Spleen (tissue), 13 donors: ENCODE measurements at regions of chr11 and their contacts with region 1.

Region 1: DNA sequence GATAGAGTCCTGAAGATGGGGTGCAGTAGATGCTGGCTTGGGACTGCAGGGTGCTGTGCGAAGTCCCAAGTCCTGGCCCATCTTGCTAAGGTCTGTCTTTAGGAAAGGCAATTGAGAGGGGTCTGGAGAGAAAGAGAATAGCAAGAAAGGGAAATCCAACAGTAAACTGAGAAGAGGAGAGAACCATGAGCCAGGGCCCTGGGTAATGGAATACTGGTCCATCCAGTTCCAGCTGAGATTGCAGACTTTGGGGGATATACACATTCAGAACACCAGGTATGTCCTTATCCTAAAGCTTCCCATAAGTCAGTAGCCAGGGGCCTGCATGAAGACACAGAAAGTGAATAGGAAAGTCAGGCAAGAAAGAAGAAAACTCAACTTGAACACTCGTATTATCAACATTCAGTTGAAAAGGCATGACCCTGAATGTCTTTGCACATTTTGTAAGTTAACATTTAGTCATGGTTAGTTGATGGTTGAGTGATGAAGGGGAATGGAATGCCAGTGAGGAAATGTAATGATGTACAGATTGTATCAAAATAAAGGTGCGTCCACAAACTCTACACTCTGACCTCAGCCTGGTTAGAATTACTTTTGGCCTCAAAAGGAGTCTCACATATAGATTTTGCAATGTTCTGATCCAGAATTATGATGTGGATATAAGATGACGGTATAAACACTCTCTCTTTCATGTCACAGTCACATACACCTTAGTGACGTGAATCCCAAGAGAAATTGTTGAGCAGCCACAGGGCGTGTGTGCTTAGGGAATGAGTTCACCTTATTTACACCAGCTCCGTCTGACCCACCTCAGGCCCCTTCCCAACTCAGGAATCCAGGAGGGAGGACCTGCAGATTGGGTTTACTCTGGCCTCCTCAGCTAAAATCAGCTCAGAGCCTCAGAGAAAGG is 100.3 kb downstream of the RDX start:
- DNase-seq: no peak
- H3K4me3 ChIP-seq: no peak overlapping the region
- H3K27ac ChIP-seq: no peak overlapping the region
- H3K4me1 ChIP-seq: peaks cover 0 to under 1% (median 0%) of the 10 kb centered on the region in 6 donors
- H3K27me3 ChIP-seq: peaks cover 0 to 8% (median 0%) of the 10 kb centered on the region in 7 donors
- CTCF ChIP-seq: no peak
- POLR2A ChIP-seq: no peak

Region 2: GRCh38 chr11:109946322-109946846 is 249.7 kb before region 1 on chr11:
- intact Hi-C with region 1: loop called (anchors 10 kb)
- DNase-seq: peak; percentile 83
- H3K4me3 ChIP-seq: peak overlapping the region in 5 of 8 donors; percentile 6 to 52 (median 21)
- H3K27ac ChIP-seq: peak overlapping the region in 4 of 8 donors; percentile 40 to 65 (median 53)
- H3K4me1 ChIP-seq: peaks cover 0 to 13% (median 8%) of the 10 kb centered on the region in 6 donors
- H3K27me3 ChIP-seq: no peaks in the 10 kb centered on the region
- CTCF ChIP-seq: peak; percentile 71 to 90 (median 80)
- POLR2A ChIP-seq: no peak

Region 3: DNA sequence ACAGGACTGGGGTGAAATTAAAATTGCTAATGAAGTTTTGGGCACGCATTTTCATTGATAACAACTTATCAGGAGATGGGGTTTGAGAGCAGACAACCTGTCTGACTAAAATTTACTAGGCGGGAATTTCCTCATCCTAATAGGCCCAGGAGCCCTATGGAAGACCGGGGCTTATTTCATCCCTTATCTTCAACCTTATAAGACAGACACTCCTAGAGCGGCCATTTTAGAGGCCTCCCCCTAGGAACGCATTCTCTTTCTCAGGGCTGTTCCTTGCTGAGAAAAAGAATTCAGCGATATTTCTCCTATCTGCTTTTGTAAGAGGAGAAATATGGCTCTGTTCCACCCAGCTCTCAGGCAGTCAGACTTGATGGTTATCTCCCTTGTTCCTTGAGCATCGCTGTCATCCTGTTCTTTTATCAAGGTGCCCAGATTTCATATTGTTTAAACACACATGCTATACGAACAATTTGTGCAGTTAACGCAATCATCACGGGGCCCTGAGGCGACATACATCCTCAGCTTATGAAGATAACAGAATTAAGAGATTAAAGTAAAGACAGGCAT is 142.2 kb before region 1 on chr11:
- intact Hi-C with region 1: no loop called
- DNase-seq: no peak
- H3K4me3 ChIP-seq: no peak overlapping the region
- H3K27ac ChIP-seq: no peak overlapping the region
- H3K4me1 ChIP-seq: no peaks in the 10 kb centered on the region
- H3K27me3 ChIP-seq: peaks cover 0 to 12% (median 0%) of the 10 kb centered on the region in 7 donors
- CTCF ChIP-seq: no peak
- POLR2A ChIP-seq: no peak

Region 4: DNA sequence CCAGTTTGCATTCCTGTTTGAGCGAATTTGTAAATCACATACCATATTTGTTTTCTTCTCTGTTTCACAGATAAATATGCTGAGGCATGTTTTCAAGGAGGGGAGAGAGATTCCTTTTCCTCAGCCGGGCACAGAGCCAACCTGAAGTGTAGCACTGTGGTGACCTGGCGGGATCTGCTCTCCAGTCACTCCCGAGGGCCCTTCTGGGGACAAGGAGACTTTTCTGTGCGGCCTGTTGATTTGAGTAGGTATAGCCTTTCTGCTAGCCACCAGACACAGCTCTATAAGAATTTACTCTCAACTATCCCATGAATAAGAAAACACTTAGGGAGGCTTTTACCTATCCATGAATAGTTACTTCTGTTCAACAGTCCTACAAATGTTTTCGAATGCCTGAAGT is 170.2 kb after region 1 on chr11:
- intact Hi-C with region 1: loop called (anchors 2 kb)
- DNase-seq: no peak
- H3K4me3 ChIP-seq: no peak overlapping the region
- H3K27ac ChIP-seq: no peak overlapping the region
- H3K4me1 ChIP-seq: peaks cover 0 to 6% (median 1%) of the 10 kb centered on the region in 6 donors
- H3K27me3 ChIP-seq: no peaks in the 10 kb centered on the region
- CTCF ChIP-seq: no peak
- POLR2A ChIP-seq: no peak

Region 5: GRCh38 chr11:110429731-110430266 is 233.7 kb after region 1 on chr11 and contains the start of gene FDX1:
- intact Hi-C with region 1: loop called (anchors 5 kb)
- DNase-seq: peak; percentile 97
- H3K4me3 ChIP-seq: peak within 1 kb of the TSS; percentile 56 to 92 (median 76)
- H3K27ac ChIP-seq: peak within 1 kb of the TSS; percentile 91 to 96 (median 94)
- H3K4me1 ChIP-seq: peaks cover 23 to 56% (median 42%) of the 10 kb centered on the region in 6 donors
- H3K27me3 ChIP-seq: no peaks in the 10 kb centered on the region
- CTCF ChIP-seq: peak in 9 of 11 experiments; percentile 13 to 83 (median 80)
- POLR2A ChIP-seq: peak in 1 of 3 donors; percentile 14
- total RNA-seq, gene FDX1: 10.0 to 15.7 (median 10.4) TPM